ENCODE measurements at regions of chr14 and their contacts with region 1.

Region 1: GRCh38 chr14:58637391-58638230 is at the start of gene DACT1:
- DNase-seq: peak; percentile 79
- ATAC-seq: peak; percentile 79
- H3K4me3 ChIP-seq: peak within 1 kb of the TSS; percentile 81
- H3K27ac ChIP-seq: peak within 1 kb of the TSS; percentile 81
- H3K4me1 ChIP-seq: peaks cover 1% of the 10 kb centered on the region; the same call in 1 of the 2 replicates
- H3K27me3 ChIP-seq: no peaks in the 10 kb centered on the region
- CTCF ChIP-seq: 0 out of 2 replicates have a peak, but pooled peaks have one; percentile 13
- POLR2A ChIP-seq: peak; percentile 95
- RAD21 ChIP-seq: peak; percentile 19
- total RNA-seq, gene DACT1: 8.1 and 9.7 TPM in 2 replicates

Region 2: GRCh38 chr14:58584383-58584782 is 53.2 kb before region 1 on chr14:
- CTCF ChIA-PET with region 1: no interaction called
- POLR2A ChIA-PET with region 1: no interaction called
- dilution Hi-C with region 1: no loop called
- in situ Hi-C with region 1: no loop called
- intact Hi-C with region 1: loop called (anchors 2 kb)
- DNase-seq: peak; percentile 76
- ATAC-seq: peak; percentile 85
- H3K4me3 ChIP-seq: no peak overlapping the region
- H3K27ac ChIP-seq: no peak overlapping the region
- H3K4me1 ChIP-seq: peaks cover 15% of the 10 kb centered on the region
- H3K27me3 ChIP-seq: no peaks in the 10 kb centered on the region
- CTCF ChIP-seq: no peak
- POLR2A ChIP-seq: no peak
- RAD21 ChIP-seq: no peak

Region 3: DNA sequence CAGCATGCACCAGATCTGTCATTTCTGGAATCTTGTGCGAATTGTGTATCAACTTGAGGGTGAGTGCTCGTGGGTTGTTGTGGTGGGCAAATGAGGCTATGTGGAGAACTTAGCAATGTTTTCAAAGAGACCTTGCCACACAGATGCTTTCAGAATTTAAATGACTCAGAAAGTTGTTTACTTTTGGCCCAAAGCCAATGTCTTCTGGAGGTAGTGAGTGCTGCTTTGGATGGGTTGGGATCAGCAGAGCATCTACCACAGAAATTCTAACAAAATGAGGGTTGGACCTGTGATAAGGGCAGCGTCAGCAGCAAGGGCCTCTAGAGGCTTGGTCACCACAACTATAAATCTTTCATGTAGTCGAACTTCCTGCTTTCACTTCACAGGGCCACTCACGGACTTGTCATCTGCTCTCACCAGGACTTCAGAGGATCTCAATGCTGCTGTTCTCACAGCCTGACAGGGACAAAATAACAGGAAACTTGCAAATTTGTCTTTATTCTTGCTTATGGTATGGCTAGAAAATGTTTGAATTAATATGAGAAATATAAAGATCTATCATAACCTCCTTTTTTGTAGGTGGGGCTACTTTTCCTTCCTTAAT is 111.6 kb after region 1 on chr14:
- CTCF ChIA-PET with region 1: interaction called, 3 read pairs
- POLR2A ChIA-PET with region 1: interaction called, 7 read pairs
- dilution Hi-C with region 1: no loop called
- in situ Hi-C with region 1: no loop called
- intact Hi-C with region 1: loop called (anchors 5 kb)
- DNase-seq: peak; percentile 98
- ATAC-seq: peak; percentile 94
- H3K4me3 ChIP-seq: no peak overlapping the region
- H3K27ac ChIP-seq: no peak overlapping the region
- H3K4me1 ChIP-seq: peaks cover 13% of the 10 kb centered on the region
- H3K27me3 ChIP-seq: peaks cover 8% of the 10 kb centered on the region; the same call in 1 of the 2 replicates
- CTCF ChIP-seq: no peak
- POLR2A ChIP-seq: no peak
- RAD21 ChIP-seq: 0 out of 2 replicates have a peak, but pooled peaks have one; percentile 13

Region 4: DNA sequence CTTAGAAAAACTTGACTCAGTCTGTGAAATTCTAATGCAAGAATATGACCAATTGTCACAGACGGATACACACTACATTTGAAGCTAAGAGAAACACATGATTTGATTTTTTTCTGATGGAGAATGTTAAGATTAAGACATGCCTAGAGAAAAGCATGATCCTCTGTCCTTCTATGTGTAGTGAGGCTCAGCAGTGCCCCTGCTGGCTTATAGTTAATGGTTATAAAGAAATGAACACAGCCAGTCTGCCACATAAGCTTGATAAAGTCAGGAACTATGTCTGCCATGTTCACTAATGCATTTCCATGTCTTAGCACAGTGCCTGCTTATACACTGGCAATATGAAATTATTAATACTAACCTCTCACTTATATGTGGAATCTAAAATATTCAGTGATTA is 382.8 kb after region 1 on chr14:
- CTCF ChIA-PET with region 1: no interaction called
- POLR2A ChIA-PET with region 1: no interaction called
- dilution Hi-C with region 1: no loop called
- in situ Hi-C with region 1: loop called (anchors 10 kb)
- intact Hi-C with region 1: loop called (anchors 2 kb)
- DNase-seq: peak; percentile 46
- ATAC-seq: peak; percentile 86
- H3K4me3 ChIP-seq: no peak overlapping the region
- H3K27ac ChIP-seq: no peak overlapping the region
- H3K4me1 ChIP-seq: no peaks in the 10 kb centered on the region
- H3K27me3 ChIP-seq: no peaks in the 10 kb centered on the region
- CTCF ChIP-seq: peak; percentile 56
- POLR2A ChIP-seq: no peak
- RAD21 ChIP-seq: peak; percentile 55

Region 5: GRCh38 chr14:59055439-59056045 is 417.9 kb after region 1 on chr14:
- CTCF ChIA-PET with region 1: interaction called, 15 read pairs
- POLR2A ChIA-PET with region 1: no interaction called
- dilution Hi-C with region 1: no loop called
- in situ Hi-C with region 1: no loop called
- intact Hi-C with region 1: loop called (anchors 1 kb)
- DNase-seq: peak; percentile 72
- ATAC-seq: peak; percentile 93
- H3K4me3 ChIP-seq: no peak overlapping the region
- H3K27ac ChIP-seq: no peak overlapping the region
- H3K4me1 ChIP-seq: no peaks in the 10 kb centered on the region
- H3K27me3 ChIP-seq: peaks cover 1% of the 10 kb centered on the region; the same call in 1 of the 2 replicates
- CTCF ChIP-seq: peak; percentile 88
- POLR2A ChIP-seq: no peak
- RAD21 ChIP-seq: peak; percentile 91

Region 6: DNA sequence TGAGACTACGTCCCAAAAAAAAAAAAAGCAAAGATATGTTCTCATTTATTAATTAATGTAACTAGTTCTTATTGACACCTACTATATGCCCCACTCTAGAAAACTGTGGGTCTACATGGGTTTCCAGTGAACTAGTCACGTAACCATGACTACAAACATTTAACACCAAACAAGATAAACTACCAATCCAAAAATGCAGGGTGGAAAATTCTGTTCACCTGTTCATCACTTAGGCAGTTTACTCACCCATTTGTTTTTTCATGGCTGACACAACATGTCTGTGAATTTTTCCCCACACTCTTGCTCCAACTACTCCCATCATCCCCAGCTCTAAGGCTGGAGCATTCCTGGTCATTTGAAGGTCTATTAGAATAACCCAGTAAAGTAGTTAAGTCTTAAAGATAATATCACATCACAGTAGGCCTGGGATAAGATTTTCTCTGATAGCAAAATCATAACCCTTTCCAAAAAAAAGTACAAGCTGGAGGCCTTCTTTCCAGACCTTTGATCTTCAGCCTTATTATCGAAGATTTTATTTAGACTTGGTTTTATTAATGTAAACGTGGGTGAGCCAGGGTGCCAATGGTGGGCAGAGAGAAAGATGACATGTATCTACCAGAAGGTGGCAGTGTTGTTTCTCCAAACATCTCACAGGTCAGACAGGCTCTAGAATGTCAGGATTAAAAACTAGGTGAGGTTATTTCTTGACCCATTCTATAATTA is 489.3 kb after region 1 on chr14:
- CTCF ChIA-PET with region 1: no interaction called
- POLR2A ChIA-PET with region 1: no interaction called
- dilution Hi-C with region 1: no loop called
- in situ Hi-C with region 1: no loop called
- intact Hi-C with region 1: loop called (anchors 1 kb)
- DNase-seq: peak; percentile 64
- ATAC-seq: peak; percentile 90
- H3K4me3 ChIP-seq: no peak overlapping the region
- H3K27ac ChIP-seq: no peak overlapping the region
- H3K4me1 ChIP-seq: no peaks in the 10 kb centered on the region; the same call in 1 of the 2 replicates
- H3K27me3 ChIP-seq: peaks cover 2% of the 10 kb centered on the region; the same call in 1 of the 2 replicates
- CTCF ChIP-seq: peak; percentile 81
- POLR2A ChIP-seq: no peak
- RAD21 ChIP-seq: peak; percentile 94

Measured in IMR-90 (cell line).